H1 (cell line): ENCODE measurements at regions of chr17 and their contacts with region 1.

Region 1: GRCh38 chr17:42997984-42998938 is at the start of gene RPL27:
- DNase-seq: peak; percentile 93 to 99
- H3K4me3 ChIP-seq: peak within 1 kb of the TSS; percentile 83 to 100 (median 91)
- H3K27ac ChIP-seq: peak within 1 kb of the TSS; percentile 84
- H3K4me1 ChIP-seq: peaks cover 3 to 12% (median 4%) of the 10 kb centered on the region in 4 experiments; a peak in 6 of 7 replicates
- H3K27me3 ChIP-seq: no peaks in the 10 kb centered on the region
- CTCF ChIP-seq: peak; percentile 44 to 79 (median 70)
- EP300 ChIP-seq: peak in 1 of 2 experiments; percentile 68; a peak in 1 of 3 replicates
- POLR2A ChIP-seq: peak; percentile 71 to 98
- RAD21 ChIP-seq: peak; percentile 55 to 62
- total RNA-seq, gene RPL27: 1,415 and 1,425 TPM in 2 replicates

Region 2: DNA sequence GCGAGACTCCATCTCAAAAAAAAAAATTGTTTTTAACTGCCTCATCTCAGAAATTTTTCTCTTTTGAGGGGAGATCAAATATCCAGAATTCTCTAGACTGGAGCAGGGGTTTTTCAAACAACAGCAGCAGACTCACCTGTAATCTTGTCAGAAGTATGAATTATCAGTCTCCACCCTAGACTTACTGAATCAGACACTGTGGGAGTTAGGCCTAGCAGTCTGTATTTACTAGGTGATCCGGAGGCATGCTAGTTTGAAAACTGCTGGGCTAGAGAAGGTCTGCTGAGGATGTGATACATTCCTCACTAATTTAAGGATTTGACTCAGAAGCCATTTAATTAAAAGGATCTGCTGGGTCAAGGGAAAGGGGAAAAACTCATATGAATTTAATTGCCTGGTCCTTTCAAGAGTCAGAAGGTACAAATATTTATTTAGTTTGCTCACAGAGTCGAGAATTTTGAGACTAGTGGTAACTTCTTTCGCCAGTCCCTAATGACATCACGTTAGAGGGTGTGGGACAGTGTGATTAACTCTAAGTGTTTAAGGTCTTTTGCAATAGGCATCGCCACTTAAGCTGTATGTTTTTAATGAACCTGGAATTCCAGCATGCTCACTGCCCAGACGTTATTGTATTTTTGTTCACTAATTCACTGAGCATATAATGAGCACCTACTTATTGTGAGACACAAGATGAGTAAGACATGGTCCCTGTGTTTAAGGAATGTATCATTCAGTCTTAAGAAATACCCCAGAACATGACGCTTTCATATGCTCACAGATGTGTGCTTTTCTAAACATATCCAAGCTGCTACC is 525.3 kb before region 1 on chr17:
- CTCF ChIA-PET with region 1: no interaction called
- POLR2A ChIA-PET with region 1: no interaction called
- DNase-seq: no peak
- H3K4me3 ChIP-seq: no peak overlapping the region
- H3K27ac ChIP-seq: no peak overlapping the region
- H3K4me1 ChIP-seq: no peaks in the 10 kb centered on the region
- H3K27me3 ChIP-seq: no peaks in the 10 kb centered on the region
- CTCF ChIP-seq: no peak
- EP300 ChIP-seq: no peak
- POLR2A ChIP-seq: no peak
- RAD21 ChIP-seq: no peak

Region 3: DNA sequence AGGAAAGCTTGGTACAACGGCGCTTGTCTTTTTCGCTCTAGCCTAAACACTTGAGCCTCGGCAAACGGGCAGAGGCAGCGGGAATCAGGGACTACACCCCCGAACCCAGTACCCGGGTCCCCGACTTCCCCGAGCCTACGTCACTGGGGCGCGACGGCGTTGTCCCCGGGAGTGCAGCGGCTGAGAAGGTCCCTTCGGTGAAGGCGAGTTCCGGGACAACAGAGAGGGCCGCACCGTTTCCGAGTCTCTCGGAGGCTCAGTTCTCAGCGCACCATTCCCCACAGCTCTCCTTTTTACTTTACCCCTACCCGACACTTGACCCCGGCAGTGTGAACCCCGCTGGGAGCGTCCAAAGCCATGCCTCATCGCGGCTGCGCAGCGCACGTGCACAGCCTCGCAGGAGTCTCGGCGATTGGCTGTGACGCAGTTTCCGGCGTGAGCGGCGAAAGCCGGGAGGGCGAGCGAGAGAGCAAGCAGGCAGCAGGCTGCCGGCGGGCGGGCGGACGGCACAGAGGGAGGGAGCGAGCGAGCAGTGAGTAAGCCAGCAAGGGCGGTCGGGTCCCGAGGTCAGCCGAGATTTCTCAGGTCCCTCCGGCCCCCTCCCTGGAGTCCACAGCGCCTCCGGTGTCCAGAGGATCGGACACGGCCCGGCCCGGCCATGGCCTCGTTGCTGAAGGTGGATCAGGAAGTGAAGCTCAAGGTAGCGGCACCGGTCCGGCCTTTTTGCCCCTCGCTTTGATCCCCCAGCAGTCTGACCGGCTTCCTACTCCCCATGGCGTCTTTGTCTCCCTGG is 165.1 kb before region 1 on chr17 and contains the start of gene PSME3:
- CTCF ChIA-PET with region 1: no interaction called
- POLR2A ChIA-PET with region 1: interaction called, 17 read pairs
- DNase-seq: peak; percentile 54 to 96
- H3K4me3 ChIP-seq: peak within 1 kb of the TSS; percentile 75 to 99 (median 96)
- H3K27ac ChIP-seq: peak within 1 kb of the TSS; percentile 99
- H3K4me1 ChIP-seq: peaks cover 0 to 2% (median 0%) of the 10 kb centered on the region in 4 experiments; a peak in 2 of 7 replicates
- H3K27me3 ChIP-seq: no peaks in the 10 kb centered on the region
- CTCF ChIP-seq: no peak
- EP300 ChIP-seq: no peak
- POLR2A ChIP-seq: peak; percentile 87 to 94
- RAD21 ChIP-seq: no peak; a peak in 1 of 4 replicates
- total RNA-seq, gene PSME3: 223 and 224 TPM in 2 replicates

Region 4: DNA sequence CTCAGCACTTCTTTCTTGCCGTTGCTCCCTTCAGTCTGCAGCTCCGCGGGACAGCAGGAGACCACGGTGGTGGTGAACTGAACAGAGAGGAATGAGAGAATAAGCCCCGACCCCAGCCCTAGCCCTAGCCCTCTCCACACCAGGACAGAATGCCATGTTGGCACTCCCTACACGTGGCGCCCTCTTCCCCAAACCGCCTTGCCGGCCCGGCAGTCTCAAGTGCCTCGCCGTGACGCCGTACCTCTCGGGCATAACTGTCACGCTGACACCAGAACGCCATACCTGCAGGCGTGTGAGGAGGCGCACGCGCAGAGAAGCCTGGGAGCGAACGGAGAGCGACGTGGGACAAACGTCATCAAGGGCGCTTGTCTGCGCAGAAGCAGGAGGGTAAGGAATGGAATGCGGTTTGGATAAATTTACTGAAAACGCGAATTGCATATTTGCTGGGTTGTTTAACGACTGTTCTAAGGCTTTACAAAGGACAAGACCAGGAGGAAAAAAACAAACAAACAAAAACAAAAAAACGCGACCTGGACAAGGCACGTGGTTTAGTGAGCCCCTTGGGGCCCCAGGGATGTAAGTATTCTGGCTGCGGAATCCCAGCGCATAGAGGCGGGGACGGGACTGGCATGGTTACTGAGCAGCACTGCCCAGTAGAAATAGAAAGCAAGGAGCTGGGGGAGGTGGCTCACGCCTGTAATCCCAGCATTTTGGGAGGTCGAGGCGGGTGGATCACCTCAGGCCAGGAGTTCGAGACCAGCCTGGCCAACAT is 33.9 kb before region 1 on chr17 and contains the start of gene AARSD1:
- CTCF ChIA-PET with region 1: interaction called, 5 read pairs
- POLR2A ChIA-PET with region 1: interaction called, 27 read pairs
- DNase-seq: peak; percentile 80 to 88
- H3K4me3 ChIP-seq: peak within 1 kb of the TSS; percentile 69 to 84 (median 74)
- H3K27ac ChIP-seq: peak within 1 kb of the TSS; percentile 46; the same call in 1 of the 2 replicates
- H3K4me1 ChIP-seq: peaks cover 0 to 2% (median 0%) of the 10 kb centered on the region in 4 experiments; a peak in 1 of 7 replicates
- H3K27me3 ChIP-seq: no peaks in the 10 kb centered on the region
- CTCF ChIP-seq: no peak
- EP300 ChIP-seq: no peak
- POLR2A ChIP-seq: peak in 1 of 2 experiments; percentile 88; a peak in 2 of 3 replicates
- RAD21 ChIP-seq: no peak
- total RNA-seq, gene AARSD1: 45.0 and 51.5 TPM in 2 replicates

Region 5: GRCh38 chr17:42980398-42981397 is 17.6 kb before region 1 on chr17 and contains the start of gene RUNDC1:
- CTCF ChIA-PET with region 1: interaction called, 20 read pairs
- POLR2A ChIA-PET with region 1: interaction called, 57 read pairs
- DNase-seq: peak in 1 of 2 experiments; percentile 97
- H3K4me3 ChIP-seq: peak within 1 kb of the TSS; percentile 72 to 96 (median 89)
- H3K27ac ChIP-seq: peak within 1 kb of the TSS; percentile 57; the same call in 1 of the 2 replicates
- H3K4me1 ChIP-seq: peaks cover 3 to 16% (median 4%) of the 10 kb centered on the region in 4 experiments; a peak in 5 of 7 replicates
- H3K27me3 ChIP-seq: no peaks in the 10 kb centered on the region
- CTCF ChIP-seq: peak; percentile 4 to 34 (median 20); a peak in 3 of 4 replicates
- EP300 ChIP-seq: no peak
- POLR2A ChIP-seq: peak in 1 of 2 experiments; percentile 12; a peak in 2 of 3 replicates
- RAD21 ChIP-seq: peak in 1 of 2 experiments; percentile 40; a peak in 1 of 4 replicates
- total RNA-seq, gene RUNDC1: 10.7 and 11.9 TPM in 2 replicates

Region 6: GRCh38 chr17:43024407-43025289 is 26.4 kb after region 1 on chr17 and contains the start of gene RND2:
- CTCF ChIA-PET with region 1: interaction called, 5 read pairs
- POLR2A ChIA-PET with region 1: interaction called, 123 read pairs
- DNase-seq: peak; percentile 93 to 95
- H3K4me3 ChIP-seq: peak within 1 kb of the TSS; percentile 58 to 93 (median 84)
- H3K27ac ChIP-seq: peak within 1 kb of the TSS; percentile 91
- H3K4me1 ChIP-seq: peaks cover 19 to 28% (median 21%) of the 10 kb centered on the region in 4 experiments
- H3K27me3 ChIP-seq: no peaks in the 10 kb centered on the region
- CTCF ChIP-seq: peak; percentile 68 to 91 (median 89)
- EP300 ChIP-seq: 0 out of 3 replicates have a peak, but pooled peaks of 1 of the 2 experiments have one; percentile 53
- POLR2A ChIP-seq: peak in 1 of 2 experiments; percentile 40; a peak in 1 of 3 replicates
- RAD21 ChIP-seq: peak; percentile 93 to 94
- total RNA-seq, gene RND2: 51.3 and 56.8 TPM in 2 replicates

Region 7: DNA sequence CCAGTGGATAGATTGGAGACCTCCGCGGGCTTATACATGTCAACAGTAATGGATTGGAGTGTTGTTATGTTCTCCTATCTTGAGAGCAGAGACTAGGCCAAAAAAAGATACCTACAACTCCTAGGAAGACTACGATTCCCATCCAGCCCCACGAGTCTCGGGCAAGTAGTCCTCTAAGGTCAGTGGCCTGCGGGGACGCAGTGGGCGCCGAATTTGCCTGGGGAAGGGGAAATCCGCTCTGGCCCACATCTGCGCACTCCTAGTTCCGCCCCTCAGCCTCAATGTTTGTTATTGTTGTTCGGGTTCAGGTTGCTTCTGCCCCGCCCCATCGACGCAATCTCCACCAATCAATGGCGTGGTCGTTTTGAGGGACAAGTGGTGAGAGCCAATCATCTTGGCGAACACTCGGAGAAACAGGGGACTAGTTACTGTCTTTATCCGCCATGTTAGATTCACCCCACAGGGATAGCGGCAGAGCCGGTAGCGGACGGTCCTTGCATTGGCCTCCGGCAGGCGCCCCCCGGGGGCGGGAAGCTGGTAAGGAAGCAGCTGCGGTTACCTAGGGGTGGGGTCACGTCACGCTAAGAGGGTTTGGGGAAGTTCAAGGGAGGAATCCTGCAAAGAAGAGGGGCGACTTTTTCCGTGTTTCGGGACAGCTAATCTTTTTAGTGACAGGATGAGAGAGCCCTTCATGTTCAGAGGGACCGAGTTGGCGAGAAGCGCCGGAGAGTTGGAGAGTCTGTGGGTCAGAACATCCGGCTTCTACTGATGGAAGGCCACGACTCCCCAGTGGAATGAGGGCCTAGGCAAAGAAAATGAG is 172.7 kb after region 1 on chr17 and contains the start of gene NBR1:
- CTCF ChIA-PET with region 1: interaction called, 3 read pairs
- POLR2A ChIA-PET with region 1: interaction called, 18 read pairs
- DNase-seq: peak; percentile 91 to 98
- H3K4me3 ChIP-seq: peak within 1 kb of the TSS; percentile 73 to 90 (median 82)
- H3K27ac ChIP-seq: peak within 1 kb of the TSS; percentile 94
- H3K4me1 ChIP-seq: peaks cover 0 to 6% (median 2%) of the 10 kb centered on the region in 4 experiments; a peak in 4 of 7 replicates
- H3K27me3 ChIP-seq: no peaks in the 10 kb centered on the region
- CTCF ChIP-seq: peak; percentile 12 to 41 (median 14)
- EP300 ChIP-seq: 0 out of 3 replicates have a peak, but pooled peaks of 1 of the 2 experiments have one; percentile 30
- POLR2A ChIP-seq: peak; percentile 19 to 71
- RAD21 ChIP-seq: peak in 1 of 2 experiments; percentile 44; a peak in 2 of 4 replicates
- total RNA-seq, gene NBR1: 34.8 and 36.0 TPM in 2 replicates